ENCODE measurements at regions of chr4 and their contacts with region 1.

Region 1: GRCh38 chr4:119659616-119660015 is 31.0 kb upstream of the PDE5A start:
- DNase-seq: no peak
- H3K4me3 ChIP-seq: no peak overlapping the region
- H3K27ac ChIP-seq: no peak overlapping the region
- H3K4me1 ChIP-seq: peaks cover 0 to 22% (median 17%) of the 10 kb centered on the region in 4 donors
- H3K27me3 ChIP-seq: no peaks in the 10 kb centered on the region
- CTCF ChIP-seq: no peak
- EP300 ChIP-seq: no peak
- POLR2A ChIP-seq: no peak

Region 2: DNA sequence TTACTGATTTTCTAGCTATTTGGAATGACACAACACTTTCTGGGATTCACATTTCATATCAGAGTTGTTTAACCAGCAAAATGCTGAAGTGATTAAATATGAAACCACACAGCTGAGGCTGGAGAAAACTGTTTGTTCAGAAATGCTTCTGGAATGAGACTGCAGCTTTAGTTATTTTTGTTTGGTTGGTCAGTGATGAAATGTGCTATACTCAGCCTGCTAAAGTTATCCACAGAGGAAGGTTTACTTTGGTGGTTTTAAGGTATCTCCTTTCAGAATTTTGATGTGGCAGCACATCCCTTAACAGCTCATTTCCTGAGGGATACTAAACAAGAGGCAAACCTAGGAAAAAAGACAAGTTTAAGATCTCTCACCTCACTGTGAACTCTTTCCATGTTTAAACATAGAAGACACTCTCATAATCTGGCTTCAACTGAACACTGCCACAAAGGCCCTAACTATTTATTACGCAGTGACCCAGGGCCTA is 75.6 kb after region 1 on chr4:
- intact Hi-C with region 1: no loop called
- DNase-seq: no peak
- H3K4me3 ChIP-seq: no peak overlapping the region
- H3K27ac ChIP-seq: peak overlapping the region; percentile 49 to 84 (median 77)
- H3K4me1 ChIP-seq: peaks cover 0 to 49% (median 30%) of the 10 kb centered on the region in 4 donors
- H3K27me3 ChIP-seq: no peaks in the 10 kb centered on the region
- CTCF ChIP-seq: no peak
- EP300 ChIP-seq: no peak
- POLR2A ChIP-seq: no peak

Region 3: GRCh38 chr4:119977076-119977940 is 317.7 kb after region 1 on chr4:
- intact Hi-C with region 1: loop called (anchors 10 kb)
- DNase-seq: peak; percentile 75
- H3K4me3 ChIP-seq: no peak overlapping the region
- H3K27ac ChIP-seq: peak overlapping the region; percentile 53 to 85 (median 80)
- H3K4me1 ChIP-seq: peaks cover 0 to 66% (median 29%) of the 10 kb centered on the region in 4 donors
- H3K27me3 ChIP-seq: no peaks in the 10 kb centered on the region
- CTCF ChIP-seq: no peak
- EP300 ChIP-seq: peak; percentile 80 to 90 (median 87)
- POLR2A ChIP-seq: no peak

Measured in sigmoid colon (tissue), 7 donors.